GM12878 (cell line): ENCODE measurements at regions of chr2 and their contacts with region 1.

Region 1: GRCh38 chr2:41709702-41710599 is 337.9 kb upstream of the PKDCC start:
- DNase-seq: no peak
- ATAC-seq: peak; percentile 65
- H3K4me3 ChIP-seq: no peak overlapping the region
- H3K27ac ChIP-seq: no peak overlapping the region
- H3K4me1 ChIP-seq: peaks cover 8% of the 10 kb centered on the region
- H3K27me3 ChIP-seq: no peaks in the 10 kb centered on the region
- CTCF ChIP-seq: no peak
- EP300 ChIP-seq: no peak
- POLR2A ChIP-seq: no peak
- RAD21 ChIP-seq: no peak

Region 2: GRCh38 chr2:41720331-41720730 is 10.4 kb after region 1 on chr2:
- CTCF ChIA-PET with region 1: interaction called, 4 read pairs
- POLR2A ChIA-PET with region 1: interaction called, 4 read pairs
- RAD21 ChIA-PET with region 1: no interaction called
- SMC1A ChIA-PET with region 1: interaction called, 10 read pairs
- in situ Hi-C with region 1: no loop called
- intact Hi-C with region 1: no loop called
- DNase-seq: no peak
- ATAC-seq: peak; percentile 52
- H3K4me3 ChIP-seq: no peak overlapping the region
- H3K27ac ChIP-seq: no peak overlapping the region
- H3K4me1 ChIP-seq: 0 out of 2 replicates have a peak, but pooled peaks cover 5% of the 10 kb centered on the region
- H3K27me3 ChIP-seq: no peaks in the 10 kb centered on the region
- CTCF ChIP-seq: no peak
- EP300 ChIP-seq: no peak
- POLR2A ChIP-seq: no peak
- RAD21 ChIP-seq: no peak

Region 3: DNA sequence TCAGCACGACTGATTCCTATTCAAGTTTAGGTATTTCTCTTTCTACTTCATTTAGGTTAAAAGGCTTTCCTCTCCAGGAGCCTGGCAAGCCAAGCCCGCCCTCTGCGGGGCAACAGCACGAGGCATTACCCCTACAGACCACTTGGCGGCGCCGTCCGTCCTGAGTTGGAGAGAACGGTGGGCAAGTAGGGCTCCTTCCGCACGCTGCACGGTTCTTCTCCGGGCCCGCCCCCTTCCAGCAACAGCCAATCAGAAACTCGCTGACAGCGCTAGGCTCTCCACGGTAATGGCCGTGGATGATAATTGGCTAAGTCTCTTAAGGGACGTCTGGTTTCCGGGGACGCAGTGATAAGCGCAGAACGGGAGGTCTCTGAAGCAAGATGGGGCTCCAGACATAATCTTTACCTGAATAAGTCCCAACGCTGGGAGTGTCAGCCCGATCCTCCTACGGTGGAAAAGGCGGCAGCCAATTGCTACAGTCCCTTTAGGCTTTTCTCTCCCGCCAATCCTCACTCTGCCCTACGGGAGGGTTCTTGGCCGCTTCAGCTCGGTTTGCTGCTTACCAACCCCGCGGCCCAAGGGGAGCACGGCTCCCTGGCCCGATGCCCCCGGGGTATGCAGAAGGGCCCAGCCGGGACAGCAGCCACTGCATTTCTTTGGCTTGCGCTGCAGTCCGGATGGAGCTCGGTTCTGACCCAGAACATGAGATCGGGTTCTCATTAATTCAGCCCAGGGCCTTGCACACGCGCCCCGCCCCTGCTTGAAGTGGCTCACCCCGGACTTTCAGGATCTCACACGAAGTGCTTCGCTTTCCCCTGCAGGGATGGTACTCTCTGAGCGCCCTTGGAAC is 131.0 kb after region 1 on chr2:
- CTCF ChIA-PET with region 1: no interaction called
- POLR2A ChIA-PET with region 1: no interaction called
- RAD21 ChIA-PET with region 1: no interaction called
- SMC1A ChIA-PET with region 1: no interaction called
- in situ Hi-C with region 1: no loop called
- intact Hi-C with region 1: no loop called
- DNase-seq: peak; percentile 88
- ATAC-seq: peak; percentile 100
- H3K4me3 ChIP-seq: peak overlapping the region; percentile 75
- H3K27ac ChIP-seq: peak overlapping the region; percentile 53; the same call in 1 of the 2 replicates
- H3K4me1 ChIP-seq: no peaks in the 10 kb centered on the region
- H3K27me3 ChIP-seq: peaks cover 1 to 2% of the 10 kb centered on the region in 2 experiments; a peak in 2 of 4 replicates
- CTCF ChIP-seq: peak; percentile 97 to 99 (median 99)
- EP300 ChIP-seq: no peak
- POLR2A ChIP-seq: peak; percentile 73
- RAD21 ChIP-seq: peak; percentile 83